Left ventricle myocardium inferior (tissue), 1 donor: ENCODE measurements at regions of chr16 and their contacts with region 1.

Region 1: GRCh38 chr16:813204-813915 is 12.8 kb upstream of the GNG13 start:
- DNase-seq: peak; percentile 46
- H3K4me3 ChIP-seq: peak overlapping the region; percentile 55
- H3K27ac ChIP-seq: no peak overlapping the region
- H3K4me1 ChIP-seq: peaks cover 15% of the 10 kb centered on the region
- H3K27me3 ChIP-seq: peaks cover 70% of the 10 kb centered on the region
- CTCF ChIP-seq: peak; percentile 77

Region 2: GRCh38 chr16:1054660-1055556 is 241.5 kb after region 1 on chr16:
- intact Hi-C with region 1: loop called (anchors 10 kb)
- DNase-seq: peak; percentile 70
- H3K4me3 ChIP-seq: no peak overlapping the region
- H3K27ac ChIP-seq: no peak overlapping the region
- H3K4me1 ChIP-seq: peaks cover 8% of the 10 kb centered on the region
- H3K27me3 ChIP-seq: peaks cover 85% of the 10 kb centered on the region
- CTCF ChIP-seq: peak; percentile 88

Region 3: GRCh38 chr16:1073566-1074378 is 260.4 kb after region 1 on chr16:
- intact Hi-C with region 1: no loop called
- DNase-seq: no peak
- H3K4me3 ChIP-seq: peak overlapping the region; percentile 57
- H3K27ac ChIP-seq: peak overlapping the region; percentile 83
- H3K4me1 ChIP-seq: peaks cover 6% of the 10 kb centered on the region
- H3K27me3 ChIP-seq: peaks cover 91% of the 10 kb centered on the region
- CTCF ChIP-seq: peak; percentile 52